ENCODE measurements at regions of chr19 and their contacts with region 1.

Region 1: DNA sequence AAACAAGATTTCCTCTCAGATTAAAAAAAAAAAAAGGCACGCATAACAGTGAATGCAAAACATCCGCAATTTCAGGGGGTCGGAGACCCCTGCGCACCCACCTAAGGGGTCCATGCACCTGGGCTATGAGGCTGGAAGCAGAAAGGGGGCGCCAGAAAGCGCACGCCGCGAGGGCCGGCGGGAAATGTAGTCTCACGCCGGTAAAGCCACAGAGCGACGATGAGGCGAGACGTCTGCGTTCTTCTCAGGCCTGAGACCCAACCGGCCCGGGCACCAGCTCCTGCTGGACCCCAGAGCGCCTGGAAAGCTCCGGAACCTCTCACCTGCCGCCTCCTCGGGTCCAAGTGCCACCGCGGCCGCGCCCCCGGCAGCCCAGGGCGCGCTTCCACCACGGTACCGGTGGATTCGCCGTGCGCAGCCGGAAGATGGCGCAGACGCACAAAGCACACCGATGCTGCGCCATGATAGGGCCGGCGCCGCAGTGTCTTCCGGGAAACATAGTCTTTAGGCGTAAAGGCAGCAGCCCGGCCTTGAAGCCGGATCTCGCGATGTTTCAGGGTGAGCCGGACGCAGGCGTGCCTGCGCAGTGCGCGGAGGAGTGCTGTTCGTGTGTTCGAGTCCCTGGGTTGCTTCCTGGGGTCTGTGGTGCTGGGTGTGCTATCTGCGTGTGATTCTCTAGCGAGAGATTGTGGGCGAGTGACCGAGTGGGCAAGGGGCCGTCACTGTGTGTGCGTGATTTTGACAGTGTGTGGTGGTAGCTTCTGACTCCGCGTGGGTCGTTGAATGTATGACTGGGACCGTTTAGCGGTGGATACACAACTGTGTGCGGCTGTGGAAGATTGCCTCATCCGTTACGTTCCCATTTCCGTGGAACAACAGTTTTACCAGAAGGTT is at the start of gene ZNF582:
- DNase-seq: peak; percentile 90 to 94 (median 93)
- H3K4me3 ChIP-seq: peak within 1 kb of the TSS; percentile 73 to 87
- H3K4me3 Mint-ChIP-seq: peak within 1 kb of the TSS; percentile 88 to 100 (median 97)
- H3K27ac ChIP-seq: peak within 1 kb of the TSS; percentile 92
- H3K27ac Mint-ChIP-seq: peak within 1 kb of the TSS; percentile 83 to 100 (median 95)
- H3K4me1 ChIP-seq: peaks cover 8% of the 10 kb centered on the region
- H3K4me1 Mint-ChIP-seq: peaks cover 6 to 16% (median 7%) of the 10 kb centered on the region in 4 donors
- H3K27me3 ChIP-seq: no peaks in the 10 kb centered on the region
- H3K27me3 Mint-ChIP-seq: no peaks in the 10 kb centered on the region
- total RNA-seq, gene ZNF582: 7.3 to 7.8 TPM

Region 2: DNA sequence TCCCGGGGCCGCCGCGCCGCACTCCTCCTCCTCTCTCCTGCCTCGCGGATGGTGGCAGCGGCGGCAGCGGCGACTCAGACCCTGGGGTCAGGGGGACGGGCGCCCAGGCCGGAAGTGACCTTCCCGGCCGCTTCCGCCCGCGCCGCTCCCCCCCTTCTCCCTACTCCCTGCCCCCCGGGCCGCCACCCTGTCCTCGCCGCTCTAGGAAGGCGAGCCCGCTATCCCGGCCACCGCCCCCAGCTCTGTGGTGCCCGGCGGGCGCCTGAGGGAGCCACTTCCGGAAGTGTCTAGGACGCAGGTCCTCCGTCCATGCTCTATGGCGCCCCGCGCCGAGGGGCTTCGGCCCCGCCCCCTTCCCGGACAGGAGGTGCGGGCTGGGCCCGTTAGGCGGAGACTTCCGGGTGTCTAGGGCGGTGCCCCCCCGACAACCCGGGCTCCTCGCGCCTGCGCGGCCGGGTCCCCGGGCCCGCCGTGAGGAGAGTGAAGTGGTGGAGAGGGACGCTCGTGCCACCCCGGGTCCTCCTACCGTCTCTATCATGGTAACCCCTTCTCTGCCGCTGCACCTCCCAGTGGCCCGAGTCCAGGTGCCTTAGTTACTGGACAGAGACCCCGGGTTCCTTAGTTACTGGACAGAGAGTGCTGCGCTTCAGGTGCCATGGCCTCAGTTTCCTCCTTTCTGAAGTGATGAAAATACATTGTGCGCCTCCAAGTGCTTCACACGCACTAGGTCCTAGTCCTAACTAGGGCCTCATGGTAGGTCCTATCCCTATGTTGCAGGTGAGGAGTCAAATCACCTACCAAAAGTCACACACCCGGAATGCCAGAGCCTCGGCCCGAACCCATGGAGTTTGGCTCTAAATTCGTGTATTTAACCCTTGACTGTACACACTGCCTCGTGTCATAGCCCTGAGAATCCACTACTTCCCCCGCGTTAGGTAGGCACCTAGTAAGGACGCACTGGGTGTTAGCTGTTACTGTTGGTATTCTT is 271.9 kb before region 1 on chr19 and contains the start of gene ZNF787:
- CTCF ChIA-PET with region 1: no interaction called
- POLR2A ChIA-PET with region 1: no interaction called
- intact Hi-C with region 1: loop called (anchors 2 kb)
- DNase-seq: peak; percentile 95 to 98 (median 98)
- H3K4me3 ChIP-seq: peak within 1 kb of the TSS; percentile 60 to 67
- H3K4me3 Mint-ChIP-seq: peak within 1 kb of the TSS; percentile 86 to 97 (median 88)
- H3K27ac ChIP-seq: peak within 1 kb of the TSS; percentile 92
- H3K27ac Mint-ChIP-seq: peak within 1 kb of the TSS; percentile 89 to 97 (median 96)
- H3K4me1 ChIP-seq: peaks cover 19% of the 10 kb centered on the region
- H3K4me1 Mint-ChIP-seq: peaks cover 21 to 49% (median 37%) of the 10 kb centered on the region in 4 donors
- H3K27me3 ChIP-seq: no peaks in the 10 kb centered on the region
- H3K27me3 Mint-ChIP-seq: no peaks in the 10 kb centered on the region
- total RNA-seq, gene ZNF787: 29.6 to 34.1 TPM

Region 3: GRCh38 chr19:56314562-56315077 is 78.7 kb before region 1 on chr19 and contains the start of gene ZSCAN5A:
- CTCF ChIA-PET with region 1: no interaction called
- POLR2A ChIA-PET with region 1: interaction called, 5 read pairs
- intact Hi-C with region 1: loop called (anchors 1 kb)
- DNase-seq: peak; percentile 98 to 100 (median 99)
- H3K4me3 ChIP-seq: peak within 1 kb of the TSS; percentile 54 to 98
- H3K4me3 Mint-ChIP-seq: peak within 1 kb of the TSS; percentile 88 to 96 (median 92)
- H3K27ac ChIP-seq: peak within 1 kb of the TSS; percentile 95
- H3K27ac Mint-ChIP-seq: peak within 1 kb of the TSS; percentile 96 to 99 (median 98)
- H3K4me1 ChIP-seq: peaks cover 14% of the 10 kb centered on the region
- H3K4me1 Mint-ChIP-seq: peaks cover 6 to 32% (median 21%) of the 10 kb centered on the region in 4 donors
- H3K27me3 ChIP-seq: no peaks in the 10 kb centered on the region
- H3K27me3 Mint-ChIP-seq: no peaks in the 10 kb centered on the region
- total RNA-seq, gene ZSCAN5A: 12.2 to 14.6 TPM

Region 4: GRCh38 chr19:56441206-56441792 is 47.9 kb after region 1 on chr19:
- CTCF ChIA-PET with region 1: no interaction called
- POLR2A ChIA-PET with region 1: no interaction called
- intact Hi-C with region 1: no loop called
- DNase-seq: no peak
- H3K4me3 ChIP-seq: no peak overlapping the region
- H3K4me3 Mint-ChIP-seq: no peak overlapping the region
- H3K27ac ChIP-seq: no peak overlapping the region
- H3K27ac Mint-ChIP-seq: no peak overlapping the region
- H3K4me1 ChIP-seq: no peaks in the 10 kb centered on the region
- H3K4me1 Mint-ChIP-seq: no peaks in the 10 kb centered on the region
- H3K27me3 ChIP-seq: no peaks in the 10 kb centered on the region
- H3K27me3 Mint-ChIP-seq: no peaks in the 10 kb centered on the region

Region 5: DNA sequence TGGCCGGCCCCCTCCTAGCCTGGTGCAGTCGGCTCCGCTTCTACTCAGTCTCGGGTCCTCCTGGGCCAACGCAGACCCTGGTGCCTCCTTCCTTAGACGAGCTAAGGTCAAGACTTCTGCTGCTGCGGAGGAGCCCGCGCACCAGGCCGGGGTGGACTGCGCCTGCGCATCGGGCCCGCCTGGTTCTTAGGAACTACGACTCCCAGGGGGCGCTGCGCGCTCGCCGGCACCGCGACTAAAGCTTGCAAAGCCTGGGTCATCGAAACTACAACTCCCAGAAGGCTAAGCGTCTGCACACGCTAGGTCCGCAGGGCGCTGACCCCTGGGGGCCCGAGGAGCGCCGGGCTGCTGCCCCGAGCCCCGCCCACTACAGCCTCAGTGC is 278.2 kb after region 1 on chr19 and contains the start of gene ZNF835:
- CTCF ChIA-PET with region 1: no interaction called
- POLR2A ChIA-PET with region 1: no interaction called
- intact Hi-C with region 1: loop called (anchors 1 kb)
- DNase-seq: peak; percentile 61 to 80 (median 75)
- H3K4me3 ChIP-seq: peak within 1 kb of the TSS in 1 of 2 donors; percentile 46
- H3K4me3 Mint-ChIP-seq: peak within 1 kb of the TSS; percentile 75 to 93 (median 86)
- H3K27ac ChIP-seq: peak within 1 kb of the TSS; percentile 32
- H3K27ac Mint-ChIP-seq: peak within 1 kb of the TSS in 5 of 7 donors; percentile 80 to 91 (median 88)
- H3K4me1 ChIP-seq: peaks cover 11% of the 10 kb centered on the region
- H3K4me1 Mint-ChIP-seq: peaks cover 5 to 15% (median 5%) of the 10 kb centered on the region in 4 donors
- H3K27me3 ChIP-seq: no peaks in the 10 kb centered on the region
- H3K27me3 Mint-ChIP-seq: no peaks in the 10 kb centered on the region
- total RNA-seq, gene ZNF835: 3.2 to 3.8 TPM

Region 6: GRCh38 chr19:58154679-58155648 is 1761.6 kb after region 1 on chr19:
- CTCF ChIA-PET with region 1: no interaction called
- POLR2A ChIA-PET with region 1: no interaction called
- intact Hi-C with region 1: loop called (anchors 10 kb)
- DNase-seq: peak; percentile 92 to 99 (median 96)
- H3K4me3 ChIP-seq: peak overlapping the region; percentile 88
- H3K4me3 Mint-ChIP-seq: peak overlapping the region; percentile 71 to 89 (median 84)
- H3K27ac ChIP-seq: peak overlapping the region; percentile 80
- H3K27ac Mint-ChIP-seq: peak overlapping the region; percentile 41 to 85 (median 69)
- H3K4me1 ChIP-seq: peaks cover 16% of the 10 kb centered on the region
- H3K4me1 Mint-ChIP-seq: peaks cover 5 to 24% (median 10%) of the 10 kb centered on the region in 4 donors
- H3K27me3 ChIP-seq: no peaks in the 10 kb centered on the region
- H3K27me3 Mint-ChIP-seq: no peaks in the 10 kb centered on the region

Measured in CD4-positive, alpha-beta memory T cell (primary cell).